ENCODE measurements at regions of chr5 and their contacts with region 1.

Region 1: DNA sequence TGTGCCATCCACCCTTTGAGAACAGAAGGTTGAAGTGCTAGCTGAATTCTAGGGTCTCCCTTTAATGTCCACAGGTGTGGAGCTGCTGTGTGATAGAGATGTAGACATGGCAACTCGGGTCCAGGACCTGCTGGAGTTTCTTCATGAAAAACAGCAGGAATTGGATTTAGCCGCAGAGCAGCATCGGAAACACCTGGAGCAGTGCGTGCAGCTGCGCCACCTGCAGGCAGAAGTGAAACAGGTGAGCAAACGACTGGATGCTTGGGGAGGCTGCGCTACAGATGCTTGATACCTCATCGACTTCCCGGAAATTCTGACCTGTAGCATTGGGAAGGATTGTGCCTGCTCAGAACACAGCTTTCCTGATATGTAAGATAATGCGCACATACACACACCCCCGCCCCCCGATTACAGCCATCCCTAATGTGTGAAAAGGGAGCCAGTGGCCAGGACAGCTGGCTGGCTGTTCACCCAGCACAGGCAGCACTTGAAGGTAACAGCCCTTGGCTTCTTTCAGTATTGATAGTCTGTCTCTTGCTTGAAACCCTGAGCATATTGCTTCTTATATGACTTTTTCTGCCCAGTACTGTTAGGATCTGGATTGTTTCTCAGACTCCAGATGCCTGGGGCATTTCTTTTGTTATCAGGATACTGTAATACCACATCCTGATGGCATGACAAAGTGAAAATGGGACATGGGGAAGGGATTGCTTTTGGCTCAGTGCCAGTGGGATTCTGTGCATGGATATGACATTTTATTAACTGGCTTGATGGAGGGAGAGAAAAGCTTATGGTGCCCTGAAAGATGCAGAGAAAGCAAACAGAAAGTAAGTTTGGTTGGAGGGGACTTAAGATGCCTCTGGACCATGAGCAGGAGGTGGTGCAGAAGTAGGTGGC is 216.8 kb upstream of the OTULINL start:
- DNase-seq: peak; percentile 53
- H3K4me3 Mint-ChIP-seq: no peak overlapping the region
- H3K27ac Mint-ChIP-seq: no peak overlapping the region
- H3K4me1 Mint-ChIP-seq: no peaks in the 10 kb centered on the region
- H3K27me3 Mint-ChIP-seq: no peaks in the 10 kb centered on the region
- CTCF ChIP-seq: peak; percentile 50

Region 2: GRCh38 chr5:13987843-13988464 is 376.9 kb before region 1 on chr5:
- CTCF ChIA-PET with region 1: interaction called, 45 read pairs
- POLR2A ChIA-PET with region 1: interaction called, 4 read pairs
- intact Hi-C with region 1: loop called (anchors 1 kb)
- DNase-seq: peak; percentile 75
- H3K4me3 Mint-ChIP-seq: no peak overlapping the region
- H3K27ac Mint-ChIP-seq: no peak overlapping the region
- H3K4me1 Mint-ChIP-seq: peaks cover 7% of the 10 kb centered on the region
- H3K27me3 Mint-ChIP-seq: no peaks in the 10 kb centered on the region
- CTCF ChIP-seq: peak; percentile 88

Region 3: DNA sequence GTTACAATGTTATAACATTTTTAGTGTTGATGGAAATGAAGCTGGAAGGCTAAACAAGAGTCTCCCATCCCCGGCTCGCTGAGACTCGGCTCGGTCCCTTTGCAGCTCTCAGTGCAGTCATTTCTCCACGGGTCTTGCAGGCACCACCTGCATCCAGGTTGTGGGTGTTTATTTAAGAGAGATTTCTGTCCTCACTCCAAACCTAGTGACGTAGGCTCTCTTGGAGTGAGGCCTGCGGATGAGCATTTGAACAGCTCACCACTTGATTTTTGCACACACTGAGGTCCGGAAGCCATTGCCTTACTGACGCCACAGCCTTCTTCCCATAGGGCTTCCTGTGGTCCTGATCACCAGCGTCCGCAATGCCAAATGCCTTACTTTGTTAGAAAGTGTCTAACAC is 19.1 kb after region 1 on chr5:
- CTCF ChIA-PET with region 1: interaction called, 10 read pairs
- POLR2A ChIA-PET with region 1: interaction called, 3 read pairs
- intact Hi-C with region 1: no loop called
- DNase-seq: no peak
- H3K4me3 Mint-ChIP-seq: no peak overlapping the region
- H3K27ac Mint-ChIP-seq: peak overlapping the region; percentile 23
- H3K4me1 Mint-ChIP-seq: no peaks in the 10 kb centered on the region
- H3K27me3 Mint-ChIP-seq: no peaks in the 10 kb centered on the region
- CTCF ChIP-seq: no peak

Region 4: DNA sequence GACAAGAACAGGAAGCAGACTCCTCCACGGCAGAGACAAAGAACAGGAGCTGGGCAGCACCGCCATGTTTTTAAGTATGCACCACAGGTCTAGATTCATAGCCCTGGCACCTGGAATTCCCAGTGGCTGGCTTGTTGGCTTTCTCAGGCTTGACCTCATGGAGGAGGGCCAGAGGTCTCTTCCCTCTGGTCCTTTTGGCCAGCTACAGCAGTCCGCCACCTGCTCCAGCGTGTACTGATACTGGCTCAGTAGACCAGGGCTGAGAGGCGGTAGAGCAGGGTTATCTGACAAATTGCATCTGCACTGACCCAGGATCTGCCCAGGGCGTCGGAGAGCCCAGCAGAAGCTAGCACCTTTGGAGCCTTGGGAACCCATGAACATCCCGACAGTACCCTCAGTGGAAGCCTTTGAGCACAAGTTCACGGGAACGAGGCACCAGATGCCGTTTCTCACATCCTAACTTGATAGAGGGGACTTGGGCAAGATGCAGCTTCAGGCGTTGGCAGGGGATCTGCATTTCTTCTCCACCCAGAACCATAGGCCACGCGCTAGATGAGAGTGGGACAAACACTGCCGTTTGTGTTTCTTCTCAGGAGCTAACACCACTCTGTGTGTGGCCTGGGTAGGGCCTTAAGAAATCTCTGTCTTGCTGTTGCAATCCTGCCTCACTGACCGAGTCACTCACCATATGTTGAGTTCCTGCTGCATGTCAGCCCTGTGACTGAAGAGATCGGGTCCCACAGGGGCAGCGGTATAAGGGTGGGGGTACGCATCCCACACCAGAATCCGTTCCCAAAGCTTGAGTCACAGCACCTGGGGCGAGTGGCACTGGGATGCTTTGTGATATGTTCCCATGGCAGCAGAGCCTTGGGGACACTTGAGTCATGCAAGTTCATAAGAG is 126.4 kb after region 1 on chr5:
- CTCF ChIA-PET with region 1: no interaction called
- POLR2A ChIA-PET with region 1: no interaction called
- intact Hi-C with region 1: no loop called
- DNase-seq: peak; percentile 7
- H3K4me3 Mint-ChIP-seq: no peak overlapping the region
- H3K27ac Mint-ChIP-seq: no peak overlapping the region
- H3K4me1 Mint-ChIP-seq: no peaks in the 10 kb centered on the region
- H3K27me3 Mint-ChIP-seq: no peaks in the 10 kb centered on the region
- CTCF ChIP-seq: no peak

Measured in MCF 10A (cell line).